Caco-2 (cell line): ENCODE measurements at regions of chr17 and their contacts with region 1.

Region 1: DNA sequence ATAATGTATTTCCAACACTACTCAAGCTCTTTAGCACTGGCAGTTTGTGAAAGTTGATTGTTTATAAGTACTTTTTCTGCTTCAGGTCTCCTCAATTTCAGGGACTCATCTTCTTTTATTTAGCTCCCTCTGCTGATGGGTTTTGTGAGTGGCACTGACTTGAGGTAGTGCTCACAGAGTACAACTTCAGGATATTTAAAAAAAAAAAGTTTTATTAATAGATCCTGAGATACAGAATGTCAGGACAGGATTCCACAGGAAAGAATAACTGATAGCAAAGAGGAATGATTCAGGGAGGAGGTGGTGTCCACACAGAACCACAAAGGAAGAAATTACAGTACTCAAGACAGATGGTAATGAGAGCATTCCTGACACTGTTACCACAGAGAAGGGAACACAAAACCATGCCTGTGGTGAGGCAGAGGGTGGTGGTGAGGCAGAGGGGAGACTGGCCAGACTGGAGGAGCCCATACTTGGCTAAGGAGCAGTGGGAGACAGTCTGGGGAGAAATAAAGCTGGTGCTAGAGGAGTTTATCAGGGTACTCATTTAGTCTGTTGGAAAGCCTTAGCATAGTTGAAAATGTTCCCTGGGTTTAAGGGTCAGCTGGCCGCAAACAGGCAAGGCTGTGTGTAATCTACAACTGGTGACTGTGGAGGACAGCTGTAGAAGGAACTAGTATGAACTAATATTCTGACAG is 63.7 kb downstream of the SPAG9 start:
- DNase-seq: peak in 1 of 2 experiments; percentile 62
- H3K4me3 ChIP-seq: no peak overlapping the region
- H3K4me3 Mint-ChIP-seq: peak overlapping the region; percentile 23
- H3K27ac Mint-ChIP-seq: peak overlapping the region; percentile 75
- H3K4me1 ChIP-seq: peaks cover 24% of the 10 kb centered on the region
- H3K4me1 Mint-ChIP-seq: peaks cover 28% of the 10 kb centered on the region
- H3K27me3 ChIP-seq: no peaks in the 10 kb centered on the region
- H3K27me3 Mint-ChIP-seq: no peaks in the 10 kb centered on the region
- CTCF ChIP-seq: peak; percentile 73

Region 2: DNA sequence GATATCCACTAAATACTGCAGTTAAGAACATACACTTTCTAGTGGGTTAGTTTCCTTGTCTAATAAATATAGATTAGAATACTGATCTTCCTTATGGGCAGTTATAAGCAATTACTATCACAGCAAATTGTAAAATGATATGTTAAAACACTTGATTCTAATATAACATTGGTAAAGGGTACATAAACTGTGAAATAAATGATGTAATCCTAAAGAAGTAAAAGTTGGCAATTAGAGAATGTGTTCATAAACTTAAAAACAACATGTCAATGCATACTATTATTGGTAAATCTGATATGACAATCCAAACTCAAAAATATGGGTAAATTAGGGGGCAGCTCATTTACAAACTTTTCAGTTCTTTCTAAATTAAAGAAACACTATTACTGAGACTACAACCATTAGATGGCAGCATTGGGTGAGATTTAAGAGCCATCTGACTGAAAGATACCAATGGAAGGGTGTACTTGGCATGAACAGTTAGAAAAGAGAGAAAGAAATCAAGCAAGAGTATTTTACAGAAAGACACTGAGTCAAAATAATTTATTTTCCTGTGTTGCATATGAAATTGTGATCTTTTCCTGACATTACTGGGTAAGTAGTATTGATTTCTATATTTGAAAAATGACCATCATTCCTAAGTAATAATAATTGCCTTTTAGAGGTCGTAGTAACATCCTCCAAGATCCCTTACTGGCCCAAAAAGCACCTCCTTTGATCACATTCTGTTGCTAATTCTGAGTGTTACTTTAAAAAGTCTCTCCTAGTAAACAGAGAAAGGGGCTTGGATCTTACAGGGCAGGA is 55.9 kb before region 1 on chr17:
- CTCF ChIA-PET with region 1: interaction called, 10 read pairs
- POLR2A ChIA-PET with region 1: no interaction called
- intact Hi-C with region 1: loop called (anchors 1 kb)
- DNase-seq: peak in 1 of 2 experiments; percentile 66
- H3K4me3 ChIP-seq: no peak overlapping the region
- H3K4me3 Mint-ChIP-seq: no peak overlapping the region
- H3K27ac Mint-ChIP-seq: no peak overlapping the region
- H3K4me1 ChIP-seq: no peaks in the 10 kb centered on the region
- H3K4me1 Mint-ChIP-seq: peaks cover 6% of the 10 kb centered on the region
- H3K27me3 ChIP-seq: no peaks in the 10 kb centered on the region
- H3K27me3 Mint-ChIP-seq: no peaks in the 10 kb centered on the region
- CTCF ChIP-seq: peak in 1 of 2 experiments; percentile 37

Region 3: DNA sequence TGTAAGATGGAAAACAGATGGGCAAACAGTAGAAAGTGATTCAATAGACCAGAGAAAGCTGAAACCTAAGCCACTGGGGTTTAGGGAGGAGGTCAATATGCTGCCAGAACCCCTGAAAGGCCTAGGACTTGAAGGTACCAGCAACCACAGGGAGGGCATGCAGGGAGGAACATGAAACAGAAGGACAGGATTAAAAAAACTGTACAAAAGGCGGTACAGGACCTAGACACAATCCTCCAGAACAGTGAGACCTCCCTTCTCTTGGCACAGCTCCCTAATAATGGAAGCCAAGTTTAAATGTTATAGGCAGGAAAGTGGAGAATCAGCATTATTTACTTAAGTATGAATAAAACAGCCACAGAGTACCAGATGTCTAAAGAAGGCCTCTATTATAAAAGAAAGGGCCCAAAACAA is 41.8 kb before region 1 on chr17:
- CTCF ChIA-PET with region 1: no interaction called
- POLR2A ChIA-PET with region 1: no interaction called
- intact Hi-C with region 1: loop called (anchors 5 kb)
- DNase-seq: no peak
- H3K4me3 ChIP-seq: no peak overlapping the region
- H3K4me3 Mint-ChIP-seq: no peak overlapping the region
- H3K27ac Mint-ChIP-seq: no peak overlapping the region
- H3K4me1 ChIP-seq: no peaks in the 10 kb centered on the region
- H3K4me1 Mint-ChIP-seq: peaks cover 7% of the 10 kb centered on the region
- H3K27me3 ChIP-seq: no peaks in the 10 kb centered on the region
- H3K27me3 Mint-ChIP-seq: no peaks in the 10 kb centered on the region
- CTCF ChIP-seq: no peak

Region 4: DNA sequence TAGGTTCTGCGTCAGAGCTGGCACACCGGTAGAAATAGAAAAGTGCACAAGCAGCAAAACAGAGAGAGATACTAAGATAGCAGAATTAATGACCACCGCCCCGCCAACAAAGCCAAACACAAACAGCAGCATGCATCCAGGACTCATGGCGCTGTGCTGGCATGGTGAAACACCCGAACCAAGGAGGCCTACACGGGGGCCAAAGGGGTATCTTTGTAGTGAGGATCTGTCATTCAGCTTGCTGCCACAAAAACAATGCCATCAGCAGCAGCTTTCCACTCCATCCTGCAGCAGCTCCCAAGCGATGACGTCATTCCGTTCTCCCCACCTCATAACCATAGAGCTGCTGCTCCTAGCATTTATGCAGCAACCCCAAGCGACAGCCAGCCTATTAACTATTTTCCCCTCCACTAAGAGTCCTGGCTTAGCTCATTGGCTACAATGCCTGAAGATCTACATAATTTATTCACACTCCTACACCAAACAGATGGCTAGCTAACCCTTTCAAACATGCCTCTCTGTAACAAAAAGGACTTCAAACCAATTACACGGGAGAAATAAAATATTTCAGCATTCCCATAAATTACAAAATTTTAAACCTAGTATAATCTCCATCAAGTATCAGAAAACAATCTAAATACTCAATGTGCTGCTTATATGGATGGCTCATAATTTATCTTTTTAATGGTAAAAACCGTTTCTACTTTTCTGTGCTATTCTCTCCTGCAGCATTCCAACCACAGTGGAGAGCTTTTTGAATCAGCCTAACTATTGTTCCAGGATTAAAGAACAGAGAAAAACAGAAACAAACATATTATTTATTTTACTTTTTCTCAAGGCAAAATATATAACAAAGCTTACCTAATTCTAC is 10.2 kb before region 1 on chr17:
- CTCF ChIA-PET with region 1: interaction called, 13 read pairs
- POLR2A ChIA-PET with region 1: no interaction called
- intact Hi-C with region 1: no loop called
- DNase-seq: peak in 1 of 2 experiments; percentile 42
- H3K4me3 ChIP-seq: no peak overlapping the region
- H3K4me3 Mint-ChIP-seq: no peak overlapping the region
- H3K27ac Mint-ChIP-seq: no peak overlapping the region
- H3K4me1 ChIP-seq: 0 out of 2 replicates have a peak, but pooled peaks cover 6% of the 10 kb centered on the region
- H3K4me1 Mint-ChIP-seq: peaks cover 6% of the 10 kb centered on the region
- H3K27me3 ChIP-seq: no peaks in the 10 kb centered on the region
- H3K27me3 Mint-ChIP-seq: no peaks in the 10 kb centered on the region
- CTCF ChIP-seq: no peak

Region 5: GRCh38 chr17:51132964-51133319 is 76.0 kb after region 1 on chr17:
- CTCF ChIA-PET with region 1: no interaction called
- POLR2A ChIA-PET with region 1: interaction called, 15 read pairs
- intact Hi-C with region 1: no loop called
- DNase-seq: no peak
- H3K4me3 ChIP-seq: no peak overlapping the region
- H3K4me3 Mint-ChIP-seq: no peak overlapping the region
- H3K27ac Mint-ChIP-seq: no peak overlapping the region
- H3K4me1 ChIP-seq: peaks cover 21% of the 10 kb centered on the region
- H3K4me1 Mint-ChIP-seq: peaks cover 11% of the 10 kb centered on the region
- H3K27me3 ChIP-seq: no peaks in the 10 kb centered on the region
- H3K27me3 Mint-ChIP-seq: no peaks in the 10 kb centered on the region
- CTCF ChIP-seq: no peak

Region 6: DNA sequence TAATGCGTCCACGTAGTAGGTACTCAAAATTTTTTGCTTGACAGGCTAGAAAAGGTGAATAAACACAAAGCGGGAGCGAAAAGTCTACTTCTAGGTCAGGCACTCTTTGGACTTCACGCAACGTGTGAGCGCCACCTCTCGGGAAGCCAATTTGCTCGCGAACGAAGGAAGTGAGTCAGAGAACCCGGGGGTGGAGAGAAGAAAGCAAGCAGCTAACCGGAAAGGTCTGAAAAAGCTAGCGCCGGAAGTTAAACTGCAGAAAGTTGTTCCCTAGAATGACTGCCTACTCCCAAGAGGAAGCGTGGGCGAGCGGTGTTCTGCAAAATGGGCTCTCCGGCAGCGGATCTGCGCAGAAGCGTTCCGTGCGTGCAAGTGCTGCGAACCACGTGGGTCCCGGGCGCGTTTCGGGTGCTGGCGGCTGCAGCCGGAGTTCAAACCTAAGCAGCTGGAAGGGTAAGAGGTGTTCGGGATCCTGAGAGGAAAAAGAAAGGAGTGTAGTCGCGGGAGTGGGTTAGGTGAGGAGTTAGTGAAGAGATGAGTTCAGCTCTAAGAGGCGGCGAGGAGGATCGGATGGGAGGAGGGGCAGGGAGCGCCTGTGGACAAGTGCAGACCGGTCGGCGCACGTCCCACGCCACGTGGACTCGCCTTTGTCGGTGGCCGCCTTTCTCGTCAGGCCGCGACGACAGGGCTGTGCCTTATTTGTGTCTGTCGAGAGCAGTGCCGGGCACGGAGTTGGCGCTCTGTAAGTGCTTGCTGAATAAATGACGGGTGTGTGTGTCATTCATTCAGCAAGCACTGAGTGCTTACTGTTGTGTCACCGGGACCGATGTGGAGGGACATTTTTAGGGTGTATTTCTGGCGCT is 96.5 kb after region 1 on chr17 and contains the start of gene NME1:
- CTCF ChIA-PET with region 1: interaction called, 20 read pairs
- POLR2A ChIA-PET with region 1: interaction called, 3 read pairs
- intact Hi-C with region 1: loop called (anchors 1 kb)
- DNase-seq: peak; percentile 98 to 99
- H3K4me3 ChIP-seq: peak within 1 kb of the TSS; percentile 69
- H3K4me3 Mint-ChIP-seq: no peak within 1 kb of the TSS
- H3K27ac Mint-ChIP-seq: no peak within 1 kb of the TSS
- H3K4me1 ChIP-seq: peaks cover 9% of the 10 kb centered on the region
- H3K4me1 Mint-ChIP-seq: no peaks in the 10 kb centered on the region
- H3K27me3 ChIP-seq: no peaks in the 10 kb centered on the region
- H3K27me3 Mint-ChIP-seq: no peaks in the 10 kb centered on the region
- CTCF ChIP-seq: peak; percentile 65 to 89
- total RNA-seq, gene NME1: 278 and 336 TPM in 2 replicates